ENCODE measurements at regions of chr5 and their contacts with region 1.

Region 1: DNA sequence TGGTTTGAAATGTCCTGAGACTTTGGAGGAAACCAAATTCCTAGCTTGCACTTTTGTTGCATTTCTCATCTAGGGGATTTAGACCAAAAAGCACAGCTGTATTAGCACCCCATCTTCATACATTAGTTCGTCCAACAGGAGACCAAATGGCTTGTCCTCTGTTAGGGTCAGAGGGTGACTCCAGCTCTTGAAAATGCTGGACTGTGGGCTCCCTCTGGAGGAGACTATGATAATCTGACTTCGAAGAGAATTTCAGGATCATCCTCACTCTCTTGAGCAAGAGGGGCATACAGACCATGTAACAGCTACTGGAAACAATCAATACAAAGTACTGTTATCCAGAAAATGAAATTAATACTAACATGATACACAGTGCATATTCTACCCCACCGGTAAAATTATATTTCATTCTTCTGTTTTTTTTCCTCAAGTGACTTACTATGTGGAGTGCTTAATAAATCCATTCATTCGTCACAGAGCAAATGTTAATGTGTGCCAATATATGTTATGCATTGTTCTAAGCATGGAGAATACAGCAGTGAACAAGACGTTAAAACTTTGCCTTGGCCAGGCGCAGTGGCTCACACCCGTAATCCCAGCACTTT is 63.7 kb upstream of the PPP2CA start:
- DNase-seq: peak; percentile 38
- H3K4me3 ChIP-seq: no peak overlapping the region
- H3K27ac ChIP-seq: no peak overlapping the region
- H3K4me1 ChIP-seq: no peaks in the 10 kb centered on the region
- H3K27me3 ChIP-seq: no peaks in the 10 kb centered on the region
- CTCF ChIP-seq: peak; percentile 69

Region 2: GRCh38 chr5:134101686-134102439 is 187.7 kb before region 1 on chr5:
- CTCF ChIA-PET with region 1: no interaction called
- POLR2A ChIA-PET with region 1: no interaction called
- intact Hi-C with region 1: loop called (anchors 5 kb)
- DNase-seq: peak; percentile 60
- H3K4me3 ChIP-seq: no peak overlapping the region
- H3K27ac ChIP-seq: no peak overlapping the region
- H3K4me1 ChIP-seq: peaks cover 4% of the 10 kb centered on the region
- H3K27me3 ChIP-seq: no peaks in the 10 kb centered on the region
- CTCF ChIP-seq: peak; percentile 83

Region 3: DNA sequence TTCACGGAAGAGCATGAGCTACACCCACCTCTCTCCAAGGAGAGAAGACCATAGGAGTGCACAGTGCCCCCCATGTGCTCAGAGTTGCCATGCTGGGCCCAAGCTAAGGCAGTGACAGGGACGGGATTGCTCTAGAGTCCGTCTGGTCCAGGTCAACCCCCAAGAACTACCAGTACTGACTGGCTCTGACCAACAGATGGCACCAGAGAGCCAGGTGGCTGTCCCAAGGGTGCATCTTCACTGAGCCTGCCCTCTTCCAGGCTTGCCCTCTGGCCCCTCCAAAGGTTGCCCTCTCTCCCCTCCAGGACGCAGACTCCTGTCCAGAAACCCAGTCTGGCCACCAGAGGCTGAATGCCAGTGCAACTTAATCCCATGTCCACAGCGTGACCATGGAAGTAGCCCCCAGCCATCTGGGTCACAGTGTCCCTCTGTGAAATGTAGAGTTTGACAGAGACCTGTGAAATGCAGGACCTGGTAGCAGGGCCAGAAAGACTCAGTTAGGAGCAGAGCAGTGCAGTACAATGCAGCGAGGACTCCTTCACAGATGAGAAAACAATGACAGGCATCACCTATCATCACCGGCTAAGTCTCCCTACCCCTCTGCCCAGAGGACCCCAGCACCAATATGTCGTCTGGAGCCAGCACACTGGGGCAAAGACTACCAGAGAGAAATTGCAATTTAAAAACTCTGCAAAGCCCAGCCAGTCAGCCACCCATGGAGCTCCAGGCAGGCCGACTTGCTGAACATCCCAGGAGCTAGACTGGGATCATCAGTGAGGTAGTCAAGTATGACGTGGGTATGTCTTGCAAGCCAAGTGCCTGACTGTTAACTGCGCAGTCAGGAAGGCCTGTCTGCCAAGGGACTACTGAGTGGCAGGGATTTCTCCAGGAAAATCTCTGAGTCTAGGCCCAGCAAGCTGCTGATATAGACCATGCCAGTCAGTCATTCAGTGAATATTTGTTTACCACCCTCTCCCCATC is 105.2 kb before region 1 on chr5:
- CTCF ChIA-PET with region 1: interaction called, 3 read pairs
- POLR2A ChIA-PET with region 1: no interaction called
- intact Hi-C with region 1: loop called (anchors 2 kb)
- DNase-seq: peak; percentile 67
- H3K4me3 ChIP-seq: no peak overlapping the region
- H3K27ac ChIP-seq: no peak overlapping the region
- H3K4me1 ChIP-seq: no peaks in the 10 kb centered on the region
- H3K27me3 ChIP-seq: no peaks in the 10 kb centered on the region
- CTCF ChIP-seq: peak; percentile 86

Region 4: DNA sequence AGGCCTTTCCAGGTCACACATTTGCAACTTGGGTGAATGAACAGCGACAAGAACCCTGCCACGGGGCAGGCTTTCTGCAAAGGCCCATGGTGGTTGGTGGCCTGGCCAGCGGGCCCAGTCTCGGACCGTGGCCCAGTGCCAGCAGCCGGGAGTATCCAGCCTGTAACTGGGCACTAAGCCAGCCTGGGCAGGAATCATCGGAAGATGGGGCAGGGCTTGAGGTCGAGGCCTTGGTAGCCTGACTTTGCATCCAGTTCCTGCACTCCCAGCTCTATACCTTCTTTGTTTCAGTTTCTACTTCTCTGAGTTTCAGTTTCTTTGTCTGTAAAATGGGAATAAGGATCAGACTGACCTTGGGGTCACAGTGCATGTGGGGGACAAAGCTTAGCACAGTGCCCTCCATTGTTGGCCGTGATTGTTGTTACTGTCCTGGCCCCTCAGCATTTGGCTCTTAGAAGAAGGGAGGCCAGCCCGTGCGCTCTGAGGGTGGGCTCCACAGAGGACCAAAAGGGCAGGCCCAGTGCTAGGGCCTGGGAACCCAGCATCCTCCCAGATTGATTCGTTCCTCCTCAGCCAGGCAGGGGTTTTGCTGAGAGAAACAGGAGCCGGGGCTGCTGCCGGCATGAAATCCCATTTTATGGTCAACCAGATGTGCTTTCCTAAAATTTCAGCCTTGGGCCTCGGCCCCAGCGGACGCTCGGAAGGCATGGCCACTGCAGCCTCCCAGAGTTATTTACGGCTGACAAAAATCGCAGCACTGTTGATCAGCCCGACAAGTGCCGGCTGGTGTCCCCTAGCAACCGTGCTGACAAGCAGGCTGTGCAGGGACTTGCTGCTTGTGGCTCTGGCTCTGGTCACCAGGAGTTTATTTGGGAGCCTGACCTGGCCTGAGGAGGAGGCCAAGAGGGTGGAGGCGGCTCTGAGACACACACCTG is 279.4 kb after region 1 on chr5:
- CTCF ChIA-PET with region 1: no interaction called
- POLR2A ChIA-PET with region 1: no interaction called
- intact Hi-C with region 1: no loop called
- DNase-seq: no peak
- H3K4me3 ChIP-seq: no peak overlapping the region
- H3K27ac ChIP-seq: no peak overlapping the region
- H3K4me1 ChIP-seq: no peaks in the 10 kb centered on the region
- H3K27me3 ChIP-seq: no peaks in the 10 kb centered on the region
- CTCF ChIP-seq: no peak

Region 5: DNA sequence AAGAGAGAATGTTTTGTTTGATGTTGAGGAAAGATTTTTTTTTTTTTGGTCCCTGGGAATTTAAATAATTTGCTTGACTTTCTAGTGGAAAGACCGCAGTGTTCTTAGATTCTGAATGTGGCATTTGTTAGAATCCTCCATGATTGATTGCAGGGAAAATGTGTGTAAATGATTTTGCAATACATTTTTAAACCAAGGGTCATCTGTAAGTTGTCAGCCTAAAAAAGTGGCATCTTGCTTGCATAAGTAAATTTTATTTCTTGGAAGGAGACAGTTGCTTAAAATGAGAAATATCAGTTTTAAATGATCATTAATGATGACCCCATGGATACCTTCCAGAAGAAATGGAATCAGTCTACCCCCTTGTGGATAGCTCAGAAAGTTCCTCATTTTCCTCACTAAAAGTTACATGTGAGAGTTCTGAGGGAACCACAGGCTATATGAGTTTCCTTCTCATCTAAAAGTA is 1439.7 kb after region 1 on chr5:
- CTCF ChIA-PET with region 1: no interaction called
- POLR2A ChIA-PET with region 1: no interaction called
- intact Hi-C with region 1: no loop called
- DNase-seq: peak; percentile 43
- H3K4me3 ChIP-seq: no peak overlapping the region
- H3K27ac ChIP-seq: peak overlapping the region; percentile 0
- H3K4me1 ChIP-seq: peaks cover 10% of the 10 kb centered on the region
- H3K27me3 ChIP-seq: no peaks in the 10 kb centered on the region
- CTCF ChIP-seq: peak; percentile 60